PC-3 (cell line): ENCODE measurements at regions of chr2 and their contacts with region 1.

Region 1: DNA sequence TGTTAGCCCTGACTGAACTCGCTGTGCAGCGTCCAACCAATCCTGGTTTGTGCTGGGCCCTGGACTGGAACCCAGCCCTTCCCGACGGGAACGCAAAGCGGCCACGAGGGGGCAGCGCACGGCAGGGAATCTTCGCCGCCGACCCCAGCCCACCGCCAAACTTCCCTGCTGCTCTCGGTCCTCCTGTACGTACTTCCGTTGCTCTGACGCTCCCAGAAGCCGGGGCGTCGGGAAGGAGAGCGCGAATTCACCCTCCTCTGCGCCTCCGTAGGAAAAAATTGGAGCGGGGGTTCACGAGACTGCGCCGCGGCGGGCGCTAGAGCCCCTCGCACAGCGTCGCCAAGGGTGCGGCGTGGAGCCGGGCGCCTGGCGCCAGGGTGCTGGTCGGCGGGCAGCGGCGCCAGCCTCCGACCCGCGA is 948 bp upstream of the SH3RF3 start:
- DNase-seq: peak; percentile 88
- ATAC-seq: peak; percentile 52
- H3K4me3 ChIP-seq: peak overlapping the region; percentile 91
- H3K27ac ChIP-seq: peak overlapping the region; percentile 12; the same call in 1 of the 2 replicates
- H3K4me1 ChIP-seq: peaks cover 47% of the 10 kb centered on the region
- H3K27me3 ChIP-seq: no peaks in the 10 kb centered on the region
- CTCF ChIP-seq: peak; percentile 92

Region 2: DNA sequence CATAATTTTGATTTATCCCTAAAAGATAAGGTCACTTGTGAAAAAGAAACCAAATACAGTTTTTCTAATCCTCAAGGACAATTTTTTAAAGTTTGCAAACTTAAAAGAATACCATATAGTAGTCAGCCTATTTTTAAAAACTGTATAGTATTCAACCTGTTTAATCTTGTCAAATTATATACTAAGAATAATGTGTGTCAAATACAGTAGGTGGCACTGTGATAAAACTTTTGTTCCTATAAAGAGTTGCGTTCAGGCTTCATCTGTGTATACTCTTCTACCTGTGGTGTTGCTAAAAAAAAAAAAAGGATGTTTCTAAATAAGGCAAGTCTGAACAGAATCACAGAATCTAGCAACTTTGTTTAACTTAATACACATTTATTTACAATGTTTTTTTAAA is 272.9 kb before region 1 on chr2:
- CTCF ChIA-PET with region 1: no interaction called
- POLR2A ChIA-PET with region 1: no interaction called
- intact Hi-C with region 1: loop called (anchors 2 kb)
- DNase-seq: peak; percentile 56
- ATAC-seq: peak; percentile 88
- H3K4me3 ChIP-seq: no peak overlapping the region
- H3K27ac ChIP-seq: no peak overlapping the region
- H3K4me1 ChIP-seq: no peaks in the 10 kb centered on the region
- H3K27me3 ChIP-seq: no peaks in the 10 kb centered on the region
- CTCF ChIP-seq: peak; percentile 71

Region 3: DNA sequence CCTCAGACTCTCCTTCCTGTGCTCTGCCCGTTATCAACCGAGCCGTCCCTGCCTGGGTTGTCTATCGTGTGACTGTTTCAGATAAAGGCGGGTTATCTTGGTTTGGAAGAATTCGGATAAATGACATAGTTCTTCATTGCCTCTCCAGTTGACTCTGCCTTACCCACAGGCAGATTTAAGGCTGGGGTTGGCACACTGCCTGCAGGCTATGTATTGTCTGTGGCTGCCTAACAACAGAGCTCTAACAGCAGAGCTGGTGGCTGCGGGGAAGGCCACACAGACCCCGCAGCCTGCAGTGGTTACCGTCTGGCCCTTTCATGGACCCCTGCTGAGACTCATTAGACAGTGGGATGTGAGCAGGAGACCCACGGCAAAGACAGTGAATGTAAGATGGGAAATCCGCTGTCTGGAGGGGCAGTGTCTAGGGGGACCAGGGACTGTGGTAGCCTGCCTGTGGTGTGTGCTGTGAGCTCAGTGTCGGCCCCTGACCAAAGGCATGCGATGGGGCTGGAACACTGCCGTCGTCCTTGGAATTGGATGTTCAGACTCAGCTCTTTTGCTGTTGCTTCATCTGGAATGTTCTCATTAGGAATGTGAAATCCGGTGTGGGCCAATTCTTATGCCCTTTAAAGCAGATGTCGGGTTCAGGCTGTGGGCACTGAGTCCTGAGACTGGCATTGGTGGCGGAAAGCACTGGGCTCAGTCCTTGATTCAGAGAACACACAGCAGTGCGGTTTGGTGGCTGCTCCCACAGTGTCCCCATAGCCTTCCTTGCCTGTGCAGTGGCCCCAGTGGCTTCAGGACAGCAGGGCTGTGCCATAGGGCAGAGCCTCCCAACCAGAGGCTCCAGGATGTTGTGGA is 45.5 kb after region 1 on chr2:
- CTCF ChIA-PET with region 1: no interaction called
- POLR2A ChIA-PET with region 1: no interaction called
- intact Hi-C with region 1: loop called (anchors 2 kb)
- DNase-seq: no peak
- ATAC-seq: no peak
- H3K4me3 ChIP-seq: no peak overlapping the region
- H3K27ac ChIP-seq: peak overlapping the region; percentile 78; the same call in 1 of the 2 replicates
- H3K4me1 ChIP-seq: peaks cover 61% of the 10 kb centered on the region
- H3K27me3 ChIP-seq: no peaks in the 10 kb centered on the region
- CTCF ChIP-seq: no peak

Region 4: GRCh38 chr2:109238580-109238979 is 110.5 kb after region 1 on chr2:
- CTCF ChIA-PET with region 1: no interaction called
- POLR2A ChIA-PET with region 1: no interaction called
- intact Hi-C with region 1: loop called (anchors 10 kb)
- DNase-seq: peak; percentile 33
- ATAC-seq: peak; percentile 5; the same call in 1 of the 2 replicates
- H3K4me3 ChIP-seq: no peak overlapping the region
- H3K27ac ChIP-seq: peak overlapping the region; percentile 68
- H3K4me1 ChIP-seq: peaks cover 70% of the 10 kb centered on the region
- H3K27me3 ChIP-seq: no peaks in the 10 kb centered on the region
- CTCF ChIP-seq: no peak

Region 5: GRCh38 chr2:109396202-109397180 is 268.4 kb after region 1 on chr2:
- CTCF ChIA-PET with region 1: no interaction called
- POLR2A ChIA-PET with region 1: no interaction called
- intact Hi-C with region 1: loop called (anchors 1 kb)
- DNase-seq: peak; percentile 55
- ATAC-seq: peak; percentile 77
- H3K4me3 ChIP-seq: no peak overlapping the region
- H3K27ac ChIP-seq: no peak overlapping the region
- H3K4me1 ChIP-seq: peaks cover 3% of the 10 kb centered on the region; the same call in 1 of the 2 replicates
- H3K27me3 ChIP-seq: no peaks in the 10 kb centered on the region
- CTCF ChIP-seq: peak; percentile 54

Region 6: GRCh38 chr2:109510136-109511028 is 382.3 kb after region 1 on chr2:
- CTCF ChIA-PET with region 1: no interaction called
- POLR2A ChIA-PET with region 1: no interaction called
- intact Hi-C with region 1: loop called (anchors 1 kb)
- DNase-seq: peak; percentile 88
- ATAC-seq: peak; percentile 76
- H3K4me3 ChIP-seq: no peak overlapping the region
- H3K27ac ChIP-seq: no peak overlapping the region
- H3K4me1 ChIP-seq: peaks cover 10% of the 10 kb centered on the region
- H3K27me3 ChIP-seq: no peaks in the 10 kb centered on the region
- CTCF ChIP-seq: peak; percentile 94